Heart right ventricle (tissue), 16 donors: ENCODE measurements at regions of chr18 and their contacts with region 1.

Region 1: GRCh38 chr18:33062913-33063312 is 290.1 kb upstream of the KLHL14 start:
- DNase-seq: no peak
- ATAC-seq: no peak
- H3K4me3 ChIP-seq: no peak overlapping the region
- H3K27ac ChIP-seq: no peak overlapping the region
- H3K4me1 ChIP-seq: no peaks in the 10 kb centered on the region
- H3K27me3 ChIP-seq: no peaks in the 10 kb centered on the region
- CTCF ChIP-seq: no peak

Region 2: DNA sequence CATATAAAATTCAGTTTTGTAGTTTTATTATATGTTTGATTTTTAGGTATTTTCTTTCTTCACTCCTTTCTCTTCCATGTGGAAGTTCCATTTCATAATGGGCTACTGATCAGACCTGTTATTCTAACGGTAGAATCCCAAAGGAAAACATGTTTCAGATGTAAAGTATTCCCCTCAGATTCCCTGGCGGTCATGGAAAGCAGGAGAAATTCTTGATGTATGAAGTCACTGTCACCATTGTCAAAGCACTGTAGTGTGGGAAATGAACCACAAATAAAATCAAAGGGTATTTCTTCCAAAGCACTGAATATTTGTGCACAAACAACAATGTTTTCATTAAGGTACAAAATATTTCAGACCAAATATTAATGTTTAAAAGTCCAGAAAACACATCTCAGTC is 52.8 kb before region 1 on chr18:
- intact Hi-C with region 1: loop called in 1 of 10 experiments (anchors 10 kb)
- DNase-seq: no peak
- ATAC-seq: no peak
- H3K4me3 ChIP-seq: no peak overlapping the region
- H3K27ac ChIP-seq: no peak overlapping the region
- H3K4me1 ChIP-seq: no peaks in the 10 kb centered on the region
- H3K27me3 ChIP-seq: no peaks in the 10 kb centered on the region
- CTCF ChIP-seq: no peak

Region 3: DNA sequence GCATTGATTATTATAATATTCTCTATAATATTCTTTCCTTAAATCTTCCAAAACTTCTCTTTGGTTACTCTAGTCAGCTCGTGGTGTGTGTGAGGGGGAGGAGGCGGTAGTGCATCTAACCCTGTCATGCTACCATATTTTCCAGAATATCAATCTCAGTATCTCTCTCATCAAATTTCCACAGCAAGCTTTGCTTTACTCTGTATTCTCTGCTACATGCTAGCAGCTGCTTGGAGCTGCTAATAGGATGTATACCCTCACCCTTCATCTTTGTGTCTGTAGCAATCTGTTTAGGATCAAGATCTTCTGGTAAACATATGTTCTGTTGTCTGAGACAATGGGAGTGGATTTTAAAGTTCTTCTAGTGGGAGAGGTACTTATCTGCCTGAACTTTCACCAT is 13.7 kb after region 1 on chr18:
- intact Hi-C with region 1: no loop called
- DNase-seq: no peak
- ATAC-seq: no peak
- H3K4me3 ChIP-seq: no peak overlapping the region
- H3K27ac ChIP-seq: no peak overlapping the region
- H3K4me1 ChIP-seq: no peaks in the 10 kb centered on the region
- H3K27me3 ChIP-seq: no peaks in the 10 kb centered on the region
- CTCF ChIP-seq: no peak

Region 4: DNA sequence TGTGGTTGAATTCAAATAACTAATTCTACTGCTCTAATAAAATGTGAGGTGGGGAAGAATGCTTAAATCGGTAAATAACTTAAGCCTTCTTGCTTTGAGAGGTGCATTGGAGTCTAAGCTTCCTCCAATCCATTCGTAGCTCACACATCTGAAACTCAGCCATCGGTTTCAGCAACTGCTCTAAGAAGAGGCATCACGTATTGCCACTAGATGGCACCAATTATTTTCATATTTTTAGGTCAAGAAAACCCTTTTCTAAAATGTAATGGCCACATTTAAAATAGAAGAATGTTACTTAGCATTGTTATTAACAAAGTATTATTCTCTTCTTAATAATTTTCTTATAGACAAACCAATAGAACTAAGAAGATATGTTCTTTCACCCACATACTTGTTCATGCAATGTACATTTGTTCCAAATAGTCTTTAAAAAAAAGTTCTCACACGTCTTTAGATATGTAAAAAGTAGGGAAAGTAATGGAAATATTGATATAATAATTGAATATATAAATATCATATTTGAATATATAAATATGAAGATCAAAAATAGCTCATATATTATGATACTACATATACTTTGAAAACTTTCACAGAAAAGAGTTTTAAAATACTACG is 147.8 kb after region 1 on chr18:
- intact Hi-C with region 1: no loop called
- DNase-seq: no peak
- ATAC-seq: no peak
- H3K4me3 ChIP-seq: no peak overlapping the region
- H3K27ac ChIP-seq: no peak overlapping the region
- H3K4me1 ChIP-seq: no peaks in the 10 kb centered on the region
- H3K27me3 ChIP-seq: peaks cover 0 to 7% (median 0%) of the 10 kb centered on the region in 7 donors
- CTCF ChIP-seq: peak in 7 of 9 donors; percentile 30 to 55 (median 46)

Region 5: DNA sequence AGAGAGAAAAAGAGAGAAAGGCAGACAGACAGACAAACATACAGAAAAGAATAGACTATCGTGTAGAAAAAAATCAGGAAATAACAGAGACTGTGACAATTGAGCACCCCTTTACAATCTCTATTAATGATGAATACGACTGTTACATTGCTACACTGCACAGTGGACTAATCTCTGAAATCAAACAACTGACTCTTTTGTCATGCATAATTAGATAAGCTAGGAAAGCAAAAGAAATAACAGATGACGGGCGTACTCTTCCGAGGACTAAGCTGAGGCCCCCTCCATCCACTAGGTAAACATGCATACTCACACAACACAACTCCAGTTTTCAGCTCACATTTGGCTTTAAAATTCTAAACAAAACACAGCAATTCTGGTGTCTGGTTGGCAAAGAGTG is 894.8 kb after region 1 on chr18:
- intact Hi-C with region 1: loop called in 1 of 10 experiments (anchors 5 kb)
- DNase-seq: no peak
- ATAC-seq: no peak
- H3K4me3 ChIP-seq: no peak overlapping the region
- H3K27ac ChIP-seq: no peak overlapping the region
- H3K4me1 ChIP-seq: no peaks in the 10 kb centered on the region
- H3K27me3 ChIP-seq: no peaks in the 10 kb centered on the region
- CTCF ChIP-seq: no peak